Activated CD4-positive, alpha-beta T cell treated with anti-CD3 and anti-CD28 coated beads for 36 hours (primary cell): ENCODE measurements at regions of chr19 and their contacts with region 1.

Region 1: GRCh38 chr19:16185123-16185767 is at the start of gene FAM32A:
- DNase-seq: peak; percentile 99
- ATAC-seq: peak; percentile 98
- H3K4me3 Mint-ChIP-seq: peak within 1 kb of the TSS; percentile 100
- H3K27ac Mint-ChIP-seq: peak within 1 kb of the TSS; percentile 97
- H3K4me1 Mint-ChIP-seq: peaks cover 26% of the 10 kb centered on the region
- H3K27me3 Mint-ChIP-seq: no peaks in the 10 kb centered on the region
- total RNA-seq, gene FAM32A: 46.3 to 48.2 TPM

Region 2: GRCh38 chr19:15584541-15585115 is 600.6 kb before region 1 on chr19:
- CTCF ChIA-PET with region 1: no interaction called
- POLR2A ChIA-PET with region 1: no interaction called
- intact Hi-C with region 1: loop called in 1 of 2 experiments (anchors 1 kb)
- DNase-seq: peak; percentile 92
- ATAC-seq: peak; percentile 99
- H3K4me3 Mint-ChIP-seq: peak overlapping the region; percentile 36
- H3K27ac Mint-ChIP-seq: no peak overlapping the region
- H3K4me1 Mint-ChIP-seq: peaks cover 3% of the 10 kb centered on the region
- H3K27me3 Mint-ChIP-seq: peaks cover 16% of the 10 kb centered on the region

Region 3: DNA sequence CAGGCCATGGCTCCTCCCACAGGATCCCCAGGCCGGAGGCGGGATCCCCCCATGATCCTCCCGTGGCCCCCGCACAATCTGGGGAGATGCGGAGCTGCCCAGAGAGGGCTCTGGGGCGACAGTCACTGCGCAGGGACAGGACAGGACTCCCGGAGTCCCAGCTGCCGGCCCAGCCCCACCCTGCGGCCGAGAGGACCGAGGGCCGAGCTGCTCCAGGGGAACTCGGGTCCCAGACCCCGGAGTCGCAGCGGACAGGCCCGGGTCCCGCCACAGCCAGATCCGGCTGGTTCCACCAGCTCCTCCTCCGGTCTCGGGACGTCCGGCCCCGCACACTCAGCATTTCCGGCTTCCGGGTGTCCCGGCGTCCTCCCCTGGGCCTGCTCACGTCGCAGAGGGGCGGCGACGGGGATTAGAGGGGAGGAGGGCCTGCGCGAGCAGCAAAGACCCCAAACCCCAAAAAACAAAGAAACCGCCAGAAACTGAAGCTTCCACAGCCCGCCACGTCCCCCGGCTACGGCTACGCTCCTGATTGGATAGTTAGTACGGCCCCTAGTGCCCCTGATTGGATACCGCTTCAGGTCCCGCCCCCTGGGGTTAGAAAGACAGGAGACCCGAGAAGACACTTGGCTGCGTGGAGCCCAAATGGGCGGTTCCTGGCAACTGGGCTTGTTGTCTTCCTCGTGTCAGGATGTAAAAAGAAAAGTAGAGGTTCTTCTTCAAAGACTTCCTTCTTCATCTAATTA is 348.5 kb before region 1 on chr19:
- CTCF ChIA-PET with region 1: no interaction called
- POLR2A ChIA-PET with region 1: no interaction called
- intact Hi-C with region 1: loop called (anchors 1 to 10 kb)
- DNase-seq: peak; percentile 96
- ATAC-seq: peak; percentile 96
- H3K4me3 Mint-ChIP-seq: peak overlapping the region; percentile 85
- H3K27ac Mint-ChIP-seq: peak overlapping the region; percentile 98
- H3K4me1 Mint-ChIP-seq: peaks cover 15% of the 10 kb centered on the region
- H3K27me3 Mint-ChIP-seq: no peaks in the 10 kb centered on the region

Region 4: DNA sequence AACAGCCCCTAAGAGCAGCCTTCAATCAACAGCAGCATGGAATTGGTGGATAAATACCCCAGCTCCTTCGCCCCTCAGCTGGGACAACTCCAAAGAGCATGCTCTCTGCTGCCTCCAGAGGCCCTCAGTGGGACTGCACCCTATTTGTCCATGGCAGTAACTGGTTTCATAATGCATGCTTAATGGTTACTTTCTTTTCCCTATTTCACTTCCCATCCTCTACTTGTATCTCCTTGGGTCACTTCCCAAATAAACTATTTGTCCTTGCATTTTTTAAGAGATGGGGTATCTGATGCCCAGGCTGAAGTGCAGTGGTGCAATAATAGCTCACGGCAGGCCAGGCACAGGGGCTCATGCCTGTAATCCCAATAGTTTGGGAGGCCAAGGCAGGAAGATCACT is 122.5 kb before region 1 on chr19:
- CTCF ChIA-PET with region 1: interaction called, 7 read pairs
- POLR2A ChIA-PET with region 1: no interaction called
- intact Hi-C with region 1: loop called (anchors 1 kb)
- DNase-seq: peak; percentile 84
- ATAC-seq: peak; percentile 38
- H3K4me3 Mint-ChIP-seq: no peak overlapping the region
- H3K27ac Mint-ChIP-seq: no peak overlapping the region
- H3K4me1 Mint-ChIP-seq: peaks cover 24% of the 10 kb centered on the region
- H3K27me3 Mint-ChIP-seq: no peaks in the 10 kb centered on the region

Region 5: DNA sequence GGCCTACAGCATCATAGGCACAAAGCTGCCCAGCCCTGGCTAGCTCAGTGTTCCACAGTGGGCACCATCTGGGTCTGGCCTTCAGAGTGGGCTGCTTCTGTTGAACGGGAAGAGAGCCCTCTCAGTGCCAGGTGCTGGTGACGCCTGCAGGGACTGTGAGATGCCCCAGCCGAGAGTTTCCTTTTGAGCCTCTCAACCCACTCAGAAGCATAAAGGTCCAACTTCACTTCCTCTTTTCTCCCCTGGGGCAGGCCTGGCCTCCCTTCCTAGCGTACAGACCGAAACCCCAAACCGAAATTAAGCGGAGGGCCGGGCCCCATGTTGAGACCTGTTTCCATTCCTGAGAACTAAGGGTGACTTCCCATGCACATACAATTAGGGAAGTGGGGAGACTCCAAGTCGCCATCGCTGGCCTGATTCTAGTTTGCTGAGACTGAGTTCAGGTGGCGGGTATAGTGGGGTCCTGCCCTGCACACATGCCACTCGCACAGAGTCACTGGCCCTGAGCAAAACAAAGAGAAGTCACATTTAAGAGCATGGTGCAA is 66.7 kb before region 1 on chr19:
- CTCF ChIA-PET with region 1: interaction called, 4 read pairs
- POLR2A ChIA-PET with region 1: no interaction called
- intact Hi-C with region 1: loop called (anchors 2 kb)
- DNase-seq: peak; percentile 74
- ATAC-seq: peak; percentile 75
- H3K4me3 Mint-ChIP-seq: peak overlapping the region; percentile 35
- H3K27ac Mint-ChIP-seq: peak overlapping the region; percentile 89
- H3K4me1 Mint-ChIP-seq: peaks cover 59% of the 10 kb centered on the region
- H3K27me3 Mint-ChIP-seq: no peaks in the 10 kb centered on the region

Region 6: DNA sequence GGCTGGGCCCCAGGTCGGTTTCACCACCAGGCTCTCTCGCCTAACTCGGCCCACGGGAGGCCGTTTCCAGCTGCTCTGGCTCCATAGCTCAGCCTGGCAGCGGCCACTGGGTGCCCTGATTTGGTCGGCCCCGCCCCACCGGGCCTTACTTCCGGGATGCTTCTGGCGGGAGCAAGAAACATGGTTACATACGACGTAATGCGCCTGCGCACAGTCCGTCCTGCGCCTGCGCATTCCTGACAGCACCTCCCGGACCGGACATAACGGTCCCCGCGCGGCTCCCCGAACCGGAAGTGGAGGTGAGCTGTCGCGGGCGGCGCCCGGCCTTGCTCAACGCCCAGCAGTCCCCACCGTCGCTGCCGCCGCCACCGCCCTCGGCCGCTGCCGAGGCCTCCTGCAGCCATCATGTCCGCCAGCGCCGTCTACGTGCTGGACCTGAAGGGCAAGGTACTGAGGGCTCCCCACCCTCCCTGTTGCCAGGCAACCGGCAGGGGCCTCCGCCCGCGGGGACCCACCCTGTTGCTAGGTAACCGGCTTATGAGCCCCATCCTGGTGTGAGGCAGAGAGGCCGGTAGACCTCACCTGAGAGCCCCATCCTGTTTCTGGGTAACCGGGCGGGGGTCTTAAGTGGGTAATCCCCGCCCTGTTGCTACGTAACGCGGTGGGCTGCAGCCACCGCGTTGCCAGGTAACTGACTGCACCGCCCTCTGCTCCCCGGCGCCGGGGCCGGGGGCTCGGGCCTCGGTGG is 12.6 kb after region 1 on chr19 and contains the start of gene AP1M1:
- CTCF ChIA-PET with region 1: interaction called, 15 read pairs
- POLR2A ChIA-PET with region 1: interaction called, 19 read pairs
- intact Hi-C with region 1: loop called (anchors 1 kb)
- DNase-seq: peak; percentile 99
- ATAC-seq: peak; percentile 95
- H3K4me3 Mint-ChIP-seq: peak within 1 kb of the TSS; percentile 83
- H3K27ac Mint-ChIP-seq: peak within 1 kb of the TSS; percentile 96
- H3K4me1 Mint-ChIP-seq: peaks cover 33% of the 10 kb centered on the region
- H3K27me3 Mint-ChIP-seq: no peaks in the 10 kb centered on the region
- total RNA-seq, gene AP1M1: 61.8 to 92.0 TPM

Region 7: GRCh38 chr19:16457195-16457953 is 272.1 kb after region 1 on chr19:
- CTCF ChIA-PET with region 1: no interaction called
- POLR2A ChIA-PET with region 1: no interaction called
- intact Hi-C with region 1: no loop called
- DNase-seq: peak; percentile 35
- ATAC-seq: peak; percentile 52
- H3K4me3 Mint-ChIP-seq: no peak overlapping the region
- H3K27ac Mint-ChIP-seq: peak overlapping the region; percentile 58
- H3K4me1 Mint-ChIP-seq: peaks cover 47% of the 10 kb centered on the region
- H3K27me3 Mint-ChIP-seq: no peaks in the 10 kb centered on the region